Activated CD4-positive, alpha-beta memory T cell treated with anti-CD3 and anti-CD28 coated beads for 36 hours (primary cell): ENCODE measurements at regions of chr3 and their contacts with region 1.

Region 1: DNA sequence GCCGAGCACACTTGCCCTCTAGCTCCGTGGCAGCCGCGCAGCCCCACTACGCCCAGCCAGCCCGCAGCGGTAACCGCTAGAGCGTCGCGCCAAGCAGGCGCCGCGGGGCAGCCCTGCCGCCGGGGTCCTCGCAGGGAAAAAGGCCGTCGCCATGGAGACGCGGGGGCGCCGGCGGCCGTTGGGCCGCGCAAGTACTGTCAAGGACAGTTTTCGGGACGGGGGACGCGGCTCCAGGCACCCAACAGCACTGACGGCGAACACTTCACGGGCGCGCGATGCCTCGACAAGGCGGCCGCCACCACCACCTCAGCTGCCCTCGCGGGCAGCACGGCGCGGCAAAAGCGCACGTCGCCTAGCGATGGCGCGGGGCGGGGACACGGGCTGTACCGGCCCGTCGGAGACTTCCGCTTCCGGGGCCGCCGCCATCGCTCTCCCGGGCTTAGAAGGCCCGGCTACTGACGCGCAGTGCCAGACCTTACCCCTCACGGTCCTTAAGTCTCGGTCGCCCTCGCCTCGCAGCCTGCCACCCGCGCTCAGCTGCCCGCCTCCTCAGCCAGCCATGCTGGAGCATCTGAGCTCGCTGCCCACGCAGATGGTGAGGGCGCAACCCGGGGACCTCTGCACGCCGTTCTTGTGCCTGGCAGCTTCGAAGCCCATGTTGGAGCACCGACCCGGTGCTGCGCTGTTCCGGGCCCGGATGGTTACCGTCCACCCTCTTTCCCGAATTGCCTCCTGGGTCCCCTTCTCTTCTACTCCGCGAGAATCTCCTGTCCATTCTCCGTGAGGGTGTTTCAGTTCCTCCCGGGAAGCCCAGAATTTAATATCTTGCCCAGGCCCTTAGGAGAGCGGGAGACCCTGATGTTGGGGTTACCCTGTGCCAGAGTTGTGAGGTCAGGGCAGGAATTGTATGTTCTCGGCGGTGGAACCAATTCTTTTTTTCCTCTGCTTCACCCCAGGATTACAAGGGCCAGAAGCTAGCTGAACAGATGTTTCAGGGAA is at the starts of genes GLT8D1 and SPCS1:
- DNase-seq: peak; percentile 88
- H3K4me3 Mint-ChIP-seq: peak within 1 kb of the TSS; percentile 96
- H3K27ac Mint-ChIP-seq: peak within 1 kb of the TSS; percentile 89
- H3K4me1 Mint-ChIP-seq: peaks cover 25% of the 10 kb centered on the region
- H3K27me3 Mint-ChIP-seq: no peaks in the 10 kb centered on the region
- total RNA-seq, gene GLT8D1: 34.1 to 36.9 TPM
- total RNA-seq, gene SPCS1: 132 TPM

Region 2: DNA sequence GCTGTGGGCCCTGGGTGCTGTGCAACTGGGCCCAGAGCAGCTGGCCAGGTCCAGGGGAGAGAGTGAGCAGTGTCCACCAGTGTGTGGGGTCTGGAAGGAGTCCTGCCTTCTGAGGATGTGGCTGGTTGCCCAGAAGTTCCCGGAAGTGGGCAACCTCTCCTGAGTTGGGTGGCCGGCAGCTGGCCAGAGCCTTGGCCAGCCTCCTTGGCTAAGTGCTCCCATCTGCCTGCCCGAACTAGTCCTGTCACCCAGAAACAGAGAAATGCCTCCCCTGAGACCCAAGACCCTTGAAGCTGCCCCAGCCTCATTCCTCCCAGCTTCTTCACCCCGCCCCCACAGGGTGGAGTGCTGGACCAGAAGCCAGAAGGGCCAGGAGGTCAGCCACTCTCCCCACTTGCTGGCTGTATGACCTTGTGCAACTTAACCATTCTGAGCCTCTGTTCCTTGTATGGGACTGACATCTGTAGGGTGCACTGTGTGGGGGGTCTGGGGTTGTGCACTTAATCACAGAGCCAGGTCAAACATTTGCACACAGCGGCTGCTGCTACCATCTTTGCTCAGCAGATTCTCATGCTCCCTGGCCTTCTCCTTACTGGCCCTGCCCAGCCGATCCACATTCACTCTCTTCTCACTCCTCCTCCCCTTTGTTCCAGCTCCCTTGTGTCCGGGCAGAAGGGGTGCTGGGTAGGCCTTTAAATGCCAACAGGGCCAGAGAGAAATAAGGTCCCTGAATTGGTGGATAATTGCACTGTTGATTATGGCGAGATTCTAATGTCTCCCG is 515.5 kb before region 1 on chr3:
- CTCF ChIA-PET with region 1: no interaction called
- POLR2A ChIA-PET with region 1: no interaction called
- intact Hi-C with region 1: no loop called
- DNase-seq: no peak
- H3K4me3 Mint-ChIP-seq: no peak overlapping the region
- H3K27ac Mint-ChIP-seq: no peak overlapping the region
- H3K4me1 Mint-ChIP-seq: no peaks in the 10 kb centered on the region
- H3K27me3 Mint-ChIP-seq: no peaks in the 10 kb centered on the region

Region 3: DNA sequence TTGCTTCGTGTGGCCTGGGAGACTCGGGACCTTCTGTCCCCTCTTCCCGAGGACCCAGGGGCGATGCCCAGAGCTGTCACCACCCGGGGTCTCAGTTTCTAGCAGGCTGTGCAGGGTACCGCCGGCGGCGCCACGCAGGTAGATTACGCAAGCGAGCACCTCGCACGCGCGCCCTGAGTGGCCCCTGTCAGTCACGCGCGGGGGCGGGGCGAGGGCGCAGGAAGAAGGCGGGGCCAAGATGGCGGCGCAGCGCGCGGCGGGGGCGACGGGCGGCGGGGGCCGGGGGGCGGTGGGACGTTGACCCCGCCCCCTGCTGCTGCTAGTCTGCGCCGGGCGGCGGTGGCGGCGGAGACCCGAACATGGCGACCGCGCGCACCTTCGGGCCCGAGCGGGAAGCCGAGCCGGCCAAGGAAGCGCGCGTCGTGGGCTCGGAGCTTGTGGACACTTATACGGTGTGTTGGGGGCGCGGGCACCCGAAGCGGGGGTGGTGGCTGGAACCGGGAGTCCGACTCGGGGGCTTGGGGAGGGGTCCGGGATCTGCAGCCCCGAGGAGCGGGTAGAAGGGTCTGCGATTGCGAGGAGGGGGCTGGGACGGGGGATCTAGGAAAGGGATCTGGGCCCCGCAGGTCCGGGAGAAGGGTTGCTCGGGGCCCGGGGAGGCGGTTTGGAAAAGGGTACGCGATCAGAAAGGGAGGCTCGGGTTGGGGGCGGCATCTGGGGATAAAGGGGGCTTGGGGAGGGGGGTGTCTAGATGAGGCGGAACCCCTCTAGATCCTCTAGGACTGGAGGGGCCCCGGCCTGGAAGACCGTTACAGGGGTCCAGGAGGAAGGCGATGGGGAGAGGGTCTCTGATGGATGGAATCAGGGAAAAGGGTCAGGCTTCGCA is 250.5 kb before region 1 on chr3 and contains the start of gene NISCH:
- CTCF ChIA-PET with region 1: no interaction called
- POLR2A ChIA-PET with region 1: no interaction called
- intact Hi-C with region 1: loop called (anchors 5 kb)
- DNase-seq: peak; percentile 97
- H3K4me3 Mint-ChIP-seq: peak within 1 kb of the TSS; percentile 89
- H3K27ac Mint-ChIP-seq: peak within 1 kb of the TSS; percentile 87
- H3K4me1 Mint-ChIP-seq: peaks cover 35% of the 10 kb centered on the region
- H3K27me3 Mint-ChIP-seq: no peaks in the 10 kb centered on the region
- total RNA-seq, gene NISCH: 50.8 to 60.2 TPM

Region 4: DNA sequence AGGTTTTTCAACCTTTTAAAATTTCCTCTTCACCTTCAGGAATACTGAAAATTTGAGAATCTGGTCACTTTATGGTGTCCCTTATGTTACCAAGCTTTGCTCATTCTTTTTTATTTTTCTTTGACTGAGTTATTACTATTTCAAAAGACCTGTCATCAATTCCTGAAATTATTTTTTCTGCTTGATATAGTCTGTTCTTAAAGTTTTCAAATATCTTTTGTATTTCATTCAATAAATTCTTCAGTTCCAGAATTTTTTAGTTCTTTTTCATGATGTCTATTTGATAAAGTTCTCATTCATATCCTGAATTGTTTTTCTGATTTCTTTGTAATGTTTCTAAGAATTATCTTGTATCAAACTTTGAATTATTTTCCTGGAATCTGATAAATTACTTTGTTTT is 105.7 kb before region 1 on chr3:
- CTCF ChIA-PET with region 1: no interaction called
- POLR2A ChIA-PET with region 1: no interaction called
- intact Hi-C with region 1: no loop called
- DNase-seq: no peak
- H3K4me3 Mint-ChIP-seq: no peak overlapping the region
- H3K27ac Mint-ChIP-seq: no peak overlapping the region
- H3K4me1 Mint-ChIP-seq: no peaks in the 10 kb centered on the region
- H3K27me3 Mint-ChIP-seq: no peaks in the 10 kb centered on the region

Region 5: GRCh38 chr3:52742418-52743041 is 36.5 kb after region 1 on chr3:
- CTCF ChIA-PET with region 1: no interaction called
- POLR2A ChIA-PET with region 1: no interaction called
- intact Hi-C with region 1: no loop called
- DNase-seq: no peak
- H3K4me3 Mint-ChIP-seq: no peak overlapping the region
- H3K27ac Mint-ChIP-seq: no peak overlapping the region
- H3K4me1 Mint-ChIP-seq: no peaks in the 10 kb centered on the region
- H3K27me3 Mint-ChIP-seq: no peaks in the 10 kb centered on the region

Region 6: DNA sequence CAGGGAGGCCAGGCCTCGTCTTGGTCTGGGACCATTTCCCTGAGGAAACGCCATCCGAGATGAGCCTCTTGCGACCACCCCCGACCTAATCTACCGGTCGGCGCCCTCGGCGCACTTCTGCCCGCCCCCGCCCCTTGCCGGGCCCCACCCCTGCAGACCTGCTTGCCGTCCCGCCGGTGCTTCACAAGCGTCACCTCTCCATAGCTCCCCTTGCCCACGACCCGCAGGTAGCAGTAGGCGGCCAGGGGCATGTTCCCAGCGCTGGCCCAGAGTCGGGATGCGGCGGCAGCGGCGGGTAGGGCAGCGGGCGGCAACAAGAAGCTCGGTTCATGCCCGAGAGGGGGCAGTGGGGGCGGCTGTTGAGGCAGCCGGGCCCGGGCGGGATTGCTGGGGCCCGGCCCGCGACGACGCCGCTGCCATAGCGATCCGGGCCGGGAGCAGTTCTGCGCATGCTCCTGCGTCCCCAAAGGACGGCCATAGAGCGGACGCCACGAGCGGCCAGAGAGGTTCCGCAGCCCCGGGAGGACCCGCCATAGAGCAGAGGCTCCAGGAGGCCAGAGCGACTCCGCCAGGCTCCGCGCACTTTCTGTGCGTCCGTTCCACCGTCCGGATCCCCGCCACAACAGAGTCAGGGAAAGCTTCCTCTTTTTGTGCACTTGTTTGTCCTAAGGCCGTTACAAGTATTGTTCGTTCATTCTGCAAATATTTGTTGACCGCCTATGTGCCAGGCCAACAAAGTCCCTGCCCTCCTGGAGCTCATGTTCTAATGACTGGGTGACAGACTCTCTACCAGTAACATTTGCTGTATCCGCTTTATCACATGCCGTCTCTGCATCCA is 64.7 kb after region 1 on chr3 and contains the start of gene NEK4:
- CTCF ChIA-PET with region 1: no interaction called
- POLR2A ChIA-PET with region 1: interaction called, 3 read pairs
- intact Hi-C with region 1: loop called (anchors 5 kb)
- DNase-seq: peak; percentile 93
- H3K4me3 Mint-ChIP-seq: peak within 1 kb of the TSS; percentile 91
- H3K27ac Mint-ChIP-seq: peak within 1 kb of the TSS; percentile 84
- H3K4me1 Mint-ChIP-seq: peaks cover 20% of the 10 kb centered on the region
- H3K27me3 Mint-ChIP-seq: no peaks in the 10 kb centered on the region
- total RNA-seq, gene NEK4: 16.9 to 21.7 TPM

Region 7: DNA sequence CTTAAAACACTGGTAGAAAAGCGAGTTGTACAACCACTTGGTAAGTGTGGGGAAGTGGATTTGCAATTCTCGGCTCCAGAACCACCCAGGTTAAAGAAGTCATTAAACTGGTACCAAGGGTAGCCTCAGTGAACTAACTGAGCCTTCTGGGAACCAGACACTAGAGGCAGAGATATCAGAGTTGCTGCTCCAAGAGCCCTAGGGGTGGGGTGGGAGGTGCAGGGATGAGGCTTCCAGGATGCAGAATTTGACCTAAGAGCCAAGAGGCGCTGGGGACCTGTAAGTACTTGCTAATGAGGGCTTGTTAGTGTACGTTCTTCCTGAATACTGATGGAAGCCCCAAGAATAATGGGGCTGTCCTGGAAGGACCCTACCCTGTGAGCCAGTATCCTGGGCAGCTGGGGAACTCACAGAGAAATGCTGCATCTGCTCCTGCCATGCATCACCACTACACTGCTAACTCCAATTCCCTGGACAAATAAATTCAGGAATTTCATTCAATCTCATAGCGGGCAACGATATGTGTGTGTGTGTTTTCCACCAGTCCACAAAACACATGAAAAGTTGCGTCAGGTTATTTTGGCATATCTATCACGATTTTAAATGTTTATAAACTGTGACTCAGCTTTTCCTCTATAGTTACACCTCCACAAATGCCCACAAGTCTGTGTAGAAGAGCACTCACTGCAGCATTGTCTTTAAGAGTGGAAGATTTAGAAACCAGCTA is 167.6 kb after region 1 on chr3:
- CTCF ChIA-PET with region 1: no interaction called
- POLR2A ChIA-PET with region 1: no interaction called
- intact Hi-C with region 1: no loop called
- DNase-seq: no peak
- H3K4me3 Mint-ChIP-seq: no peak overlapping the region
- H3K27ac Mint-ChIP-seq: peak overlapping the region; percentile 18
- H3K4me1 Mint-ChIP-seq: peaks cover 31% of the 10 kb centered on the region
- H3K27me3 Mint-ChIP-seq: no peaks in the 10 kb centered on the region